Kidney (tissue), 22 donors: ENCODE measurements at regions of chr9 and their contacts with region 1.

Region 1: GRCh38 chr9:72592502-72593403 is 71.3 kb downstream of the TMC1 start:
- DNase-seq: peak in 4 of 5 donors; percentile 38 to 82 (median 61)
- H3K4me3 ChIP-seq: no peak overlapping the region
- H3K27ac ChIP-seq: no peak overlapping the region
- H3K4me1 ChIP-seq: peaks cover 0 to 12% (median 9%) of the 10 kb centered on the region in 3 donors
- H3K27me3 ChIP-seq: no peaks in the 10 kb centered on the region
- CTCF ChIP-seq: peak; percentile 87

Region 2: DNA sequence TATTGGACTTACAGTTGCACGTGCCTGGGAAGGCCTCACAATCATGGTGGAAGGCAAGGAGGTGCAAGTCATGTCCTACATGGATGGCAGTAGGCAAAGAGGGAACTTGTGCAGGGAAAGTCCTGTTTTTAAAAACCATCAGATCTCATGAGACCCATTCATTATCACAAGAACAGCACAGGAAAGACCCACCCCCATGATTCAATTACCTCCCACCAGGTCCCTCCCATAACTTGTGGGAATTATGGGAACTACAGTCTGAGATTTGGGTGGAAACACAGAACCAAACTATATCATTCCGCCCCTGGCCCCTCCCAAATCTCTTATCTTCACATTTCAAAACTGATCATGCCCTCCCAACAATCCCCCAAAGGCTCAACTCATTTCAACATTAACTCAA is 303.4 kb before region 1 on chr9:
- intact Hi-C with region 1: loop called (anchors 5 kb)
- DNase-seq: no peak
- H3K4me3 ChIP-seq: no peak overlapping the region
- H3K27ac ChIP-seq: no peak overlapping the region
- H3K4me1 ChIP-seq: peaks cover 3 to 8% (median 7%) of the 10 kb centered on the region in 3 donors
- H3K27me3 ChIP-seq: no peaks in the 10 kb centered on the region
- CTCF ChIP-seq: no peak

Region 3: DNA sequence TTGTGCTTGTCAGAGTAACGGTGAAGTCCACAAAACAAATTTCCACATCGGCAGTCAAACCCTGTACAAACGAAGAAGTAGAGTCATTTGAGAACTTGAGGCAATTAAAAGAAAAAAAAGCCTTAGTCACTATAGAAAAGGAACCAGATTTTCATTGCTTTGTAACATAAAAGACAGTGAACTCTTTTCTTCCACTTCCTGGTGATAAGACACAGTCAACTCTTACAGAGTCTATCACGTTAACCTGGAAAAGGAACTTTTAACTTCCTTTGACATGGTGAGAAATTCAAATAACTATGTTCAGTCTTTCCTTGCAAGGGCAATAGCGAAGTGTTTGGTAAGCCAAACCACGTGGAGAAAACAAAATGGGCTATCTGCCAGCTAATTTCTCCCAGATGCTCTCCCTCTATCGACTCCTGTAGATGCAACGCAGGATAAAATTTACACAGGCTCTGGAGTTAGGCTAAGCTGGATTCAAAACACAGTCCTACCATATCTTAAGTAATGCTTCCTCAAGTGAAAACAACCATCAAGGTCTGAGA is 236.6 kb before region 1 on chr9:
- intact Hi-C with region 1: loop called (anchors 10 kb)
- DNase-seq: no peak
- H3K4me3 ChIP-seq: no peak overlapping the region
- H3K27ac ChIP-seq: no peak overlapping the region
- H3K4me1 ChIP-seq: peaks cover 0 to 59% (median 16%) of the 10 kb centered on the region in 3 donors
- H3K27me3 ChIP-seq: no peaks in the 10 kb centered on the region
- CTCF ChIP-seq: no peak

Region 4: GRCh38 chr9:72485821-72486593 is 106.7 kb before region 1 on chr9:
- intact Hi-C with region 1: no loop called
- DNase-seq: peak in 3 of 5 donors; percentile 21 to 79 (median 56)
- H3K4me3 ChIP-seq: no peak overlapping the region
- H3K27ac ChIP-seq: no peak overlapping the region
- H3K4me1 ChIP-seq: peaks cover 0 to 9% (median 5%) of the 10 kb centered on the region in 3 donors
- H3K27me3 ChIP-seq: no peaks in the 10 kb centered on the region
- CTCF ChIP-seq: no peak